ENCODE measurements at regions of chr6 and their contacts with region 1.

Region 1: DNA sequence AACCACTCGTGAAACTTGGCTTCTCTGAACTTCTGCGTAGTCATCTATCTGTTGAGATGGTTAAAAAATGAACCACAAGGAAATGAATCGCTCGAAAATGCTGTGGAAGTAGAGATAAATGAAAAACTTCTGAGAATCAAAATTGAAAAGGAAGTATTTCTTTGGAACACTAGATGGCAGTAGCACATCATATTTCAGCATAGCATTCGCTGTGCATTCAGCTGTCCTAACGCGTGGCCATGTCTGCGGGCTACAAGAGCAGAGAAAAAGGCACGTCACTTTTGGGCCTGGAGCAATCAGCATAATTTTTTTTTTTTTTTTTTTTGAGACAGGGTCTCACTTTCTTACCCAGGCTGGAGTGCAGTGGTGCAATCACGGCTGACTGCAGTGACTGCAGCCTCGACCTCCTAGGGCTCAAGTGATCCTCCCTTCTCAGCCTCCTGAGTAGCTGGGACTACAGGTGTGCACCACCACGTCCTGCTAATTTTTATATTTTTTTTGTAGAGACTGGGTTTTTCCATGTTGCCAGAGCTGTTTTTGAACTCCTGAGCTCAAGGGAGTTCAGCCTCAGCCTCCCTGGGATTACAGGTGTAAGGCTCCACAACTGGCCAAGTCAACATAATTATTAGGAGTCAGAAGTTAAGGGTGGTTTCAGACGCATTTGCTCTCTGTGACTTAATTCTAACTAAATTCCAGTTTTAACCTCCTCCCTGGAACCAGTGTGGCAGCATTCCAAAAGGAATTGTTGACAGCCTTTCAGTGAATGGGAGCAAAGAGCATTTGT is 8.8 kb upstream of the PERP start:
- DNase-seq: peak in 8 of 9 experiments; percentile 9 to 80 (median 41)
- ATAC-seq: peak; percentile 83
- H3K4me3 ChIP-seq: no peak overlapping the region
- H3K4me3 Mint-ChIP-seq: no peak overlapping the region
- H3K27ac ChIP-seq: no peak overlapping the region
- H3K27ac Mint-ChIP-seq: no peak overlapping the region
- H3K4me1 ChIP-seq: no peaks in the 10 kb centered on the region
- H3K4me1 Mint-ChIP-seq: peaks cover 4% of the 10 kb centered on the region
- H3K27me3 ChIP-seq: peaks cover 0 to 6% of the 10 kb centered on the region in 2 experiments
- H3K27me3 Mint-ChIP-seq: peaks cover 25% of the 10 kb centered on the region
- CTCF ChIP-seq: peak; percentile 90

Region 2: DNA sequence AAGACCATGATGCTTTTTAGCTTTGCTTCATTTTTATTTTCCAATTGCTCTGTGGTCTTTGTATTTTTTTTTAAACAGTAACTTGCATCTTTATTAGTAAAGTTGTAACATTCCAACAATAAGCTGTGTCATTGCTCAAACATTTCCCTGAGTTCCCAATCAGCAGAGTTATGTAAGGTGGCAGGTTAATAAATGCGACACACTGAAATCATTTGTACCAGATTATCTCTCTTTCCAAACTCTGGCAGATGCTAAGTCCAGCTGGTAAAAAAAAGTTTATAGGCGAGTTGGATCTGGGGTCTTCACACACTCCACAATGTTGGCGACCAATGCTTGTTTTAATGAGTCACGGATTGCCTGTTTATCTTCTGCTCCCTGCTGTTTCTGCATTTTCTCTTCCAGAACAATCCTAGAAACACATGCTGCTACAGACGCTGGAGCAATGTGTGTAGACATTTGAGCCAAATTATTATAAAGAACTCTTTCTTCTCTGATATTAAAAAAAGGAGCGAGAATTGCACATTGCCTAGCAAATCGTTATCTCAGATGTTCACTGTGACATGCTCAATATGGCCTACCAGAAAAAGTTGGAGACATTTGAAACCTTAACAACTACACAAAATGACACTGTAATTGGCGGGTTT is 783.3 kb before region 1 on chr6:
- CTCF ChIA-PET with region 1: no interaction called
- POLR2A ChIA-PET with region 1: no interaction called
- intact Hi-C with region 1: no loop called
- DNase-seq: no peak
- ATAC-seq: no peak
- H3K4me3 ChIP-seq: no peak overlapping the region
- H3K4me3 Mint-ChIP-seq: no peak overlapping the region
- H3K27ac ChIP-seq: no peak overlapping the region
- H3K27ac Mint-ChIP-seq: no peak overlapping the region
- H3K4me1 ChIP-seq: no peaks in the 10 kb centered on the region
- H3K4me1 Mint-ChIP-seq: no peaks in the 10 kb centered on the region
- H3K27me3 ChIP-seq: peaks cover 0 to 2% of the 10 kb centered on the region in 2 experiments
- H3K27me3 Mint-ChIP-seq: peaks cover 10% of the 10 kb centered on the region
- CTCF ChIP-seq: no peak

Region 3: GRCh38 chr6:138001750-138002349 is 114.2 kb before region 1 on chr6:
- CTCF ChIA-PET with region 1: interaction called, 31 read pairs
- POLR2A ChIA-PET with region 1: no interaction called
- intact Hi-C with region 1: no loop called
- DNase-seq: peak; percentile 39 to 75 (median 68)
- ATAC-seq: peak; percentile 54
- H3K4me3 ChIP-seq: no peak overlapping the region
- H3K4me3 Mint-ChIP-seq: no peak overlapping the region
- H3K27ac ChIP-seq: no peak overlapping the region
- H3K27ac Mint-ChIP-seq: no peak overlapping the region
- H3K4me1 ChIP-seq: no peaks in the 10 kb centered on the region
- H3K4me1 Mint-ChIP-seq: peaks cover 8% of the 10 kb centered on the region
- H3K27me3 ChIP-seq: no peaks in the 10 kb centered on the region
- H3K27me3 Mint-ChIP-seq: no peaks in the 10 kb centered on the region
- CTCF ChIP-seq: peak; percentile 88

Region 4: DNA sequence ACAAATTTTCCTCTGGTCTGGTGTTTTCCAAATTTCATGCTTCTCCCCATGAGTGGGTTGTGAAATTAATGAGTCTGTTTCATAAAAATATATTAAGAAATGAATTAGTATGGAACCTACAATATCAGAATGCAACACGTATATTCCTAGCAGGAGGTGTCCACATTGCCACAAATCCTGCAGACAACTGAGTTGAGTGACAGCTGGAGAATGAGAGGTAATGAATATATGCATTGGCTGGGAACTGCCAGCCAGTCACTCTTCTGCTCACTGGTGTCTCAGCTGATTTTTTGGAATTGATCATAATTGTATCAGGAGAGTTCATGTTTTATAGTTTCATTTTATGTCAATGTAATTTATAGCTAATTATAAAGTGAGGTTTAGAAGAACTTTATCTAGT is 39.4 kb after region 1 on chr6:
- CTCF ChIA-PET with region 1: no interaction called
- POLR2A ChIA-PET with region 1: no interaction called
- intact Hi-C with region 1: no loop called
- DNase-seq: no peak
- ATAC-seq: no peak
- H3K4me3 ChIP-seq: no peak overlapping the region
- H3K4me3 Mint-ChIP-seq: no peak overlapping the region
- H3K27ac ChIP-seq: no peak overlapping the region
- H3K27ac Mint-ChIP-seq: no peak overlapping the region
- H3K4me1 ChIP-seq: no peaks in the 10 kb centered on the region
- H3K4me1 Mint-ChIP-seq: no peaks in the 10 kb centered on the region
- H3K27me3 ChIP-seq: peaks cover 3% of the 10 kb centered on the region in 2 experiments
- H3K27me3 Mint-ChIP-seq: peaks cover 36% of the 10 kb centered on the region
- CTCF ChIP-seq: no peak

Region 5: DNA sequence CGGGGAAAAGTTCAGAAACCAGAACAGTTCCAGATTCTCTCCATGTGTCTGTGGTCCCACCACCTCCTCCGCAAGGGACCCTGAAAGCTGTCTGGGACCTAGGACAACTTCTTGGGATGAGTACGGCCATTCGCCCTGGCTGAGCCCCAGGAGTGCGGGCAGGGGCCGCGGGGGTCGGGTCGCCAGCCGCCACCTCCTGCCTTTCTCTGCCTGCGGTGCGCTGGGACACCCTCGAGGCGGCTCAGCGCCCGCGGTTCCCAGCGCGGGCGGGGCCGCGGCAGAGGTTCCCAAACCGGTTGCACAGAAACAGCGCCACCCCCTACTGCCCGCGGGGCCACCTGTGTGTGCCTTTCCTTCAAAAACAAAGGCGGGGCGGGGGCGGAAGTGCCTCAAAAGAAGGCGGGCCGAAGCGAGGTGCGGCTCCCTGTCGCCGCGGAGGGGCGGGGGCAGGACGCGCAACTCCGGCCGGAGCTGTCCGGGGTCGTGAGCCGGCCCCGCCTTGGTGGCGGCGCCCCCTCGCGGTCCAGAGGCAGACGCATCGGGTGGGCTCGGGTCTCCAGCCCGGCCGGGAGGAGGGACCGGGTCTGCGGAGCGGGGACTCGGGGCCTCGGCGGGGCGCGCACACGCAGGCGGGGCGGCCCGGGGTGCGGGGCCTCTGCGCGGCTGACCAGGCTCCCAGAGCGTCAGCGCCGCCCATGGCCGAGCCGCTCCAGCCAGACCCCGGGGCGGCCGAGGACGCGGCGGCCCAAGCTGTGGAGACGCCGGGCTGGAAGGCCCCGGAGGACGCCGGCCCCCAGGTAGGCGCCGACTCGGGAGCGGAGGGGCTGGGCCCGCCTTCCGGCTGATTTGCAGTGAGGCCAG is 288.0 kb after region 1 on chr6 and contains the start of gene HEBP2:
- CTCF ChIA-PET with region 1: interaction called, 3 read pairs
- POLR2A ChIA-PET with region 1: no interaction called
- intact Hi-C with region 1: loop called in 1 of 2 experiments (anchors 2 kb)
- DNase-seq: peak; percentile 85 to 96 (median 93)
- ATAC-seq: peak; percentile 91
- H3K4me3 ChIP-seq: peak within 1 kb of the TSS; percentile 63 to 85
- H3K4me3 Mint-ChIP-seq: peak within 1 kb of the TSS; percentile 90
- H3K27ac ChIP-seq: peak within 1 kb of the TSS; percentile 63 to 85
- H3K27ac Mint-ChIP-seq: peak within 1 kb of the TSS; percentile 97
- H3K4me1 ChIP-seq: peaks cover 15% of the 10 kb centered on the region
- H3K4me1 Mint-ChIP-seq: peaks cover 23% of the 10 kb centered on the region
- H3K27me3 ChIP-seq: no peaks in the 10 kb centered on the region
- H3K27me3 Mint-ChIP-seq: no peaks in the 10 kb centered on the region
- CTCF ChIP-seq: peak; percentile 23
- total RNA-seq, gene HEBP2: 64.6 to 69.1 TPM

Region 6: GRCh38 chr6:138428944-138429598 is 313.0 kb after region 1 on chr6:
- CTCF ChIA-PET with region 1: interaction called, 31 read pairs
- POLR2A ChIA-PET with region 1: no interaction called
- intact Hi-C with region 1: loop called (anchors 1 to 2 kb)
- DNase-seq: peak in 2 of 9 experiments; percentile 59 to 65
- ATAC-seq: peak; percentile 59
- H3K4me3 ChIP-seq: no peak overlapping the region
- H3K4me3 Mint-ChIP-seq: no peak overlapping the region
- H3K27ac ChIP-seq: no peak overlapping the region
- H3K27ac Mint-ChIP-seq: no peak overlapping the region
- H3K4me1 ChIP-seq: no peaks in the 10 kb centered on the region
- H3K4me1 Mint-ChIP-seq: peaks cover 1% of the 10 kb centered on the region
- H3K27me3 ChIP-seq: no peaks in the 10 kb centered on the region
- H3K27me3 Mint-ChIP-seq: peaks cover 9% of the 10 kb centered on the region
- CTCF ChIP-seq: peak; percentile 88

Region 7: DNA sequence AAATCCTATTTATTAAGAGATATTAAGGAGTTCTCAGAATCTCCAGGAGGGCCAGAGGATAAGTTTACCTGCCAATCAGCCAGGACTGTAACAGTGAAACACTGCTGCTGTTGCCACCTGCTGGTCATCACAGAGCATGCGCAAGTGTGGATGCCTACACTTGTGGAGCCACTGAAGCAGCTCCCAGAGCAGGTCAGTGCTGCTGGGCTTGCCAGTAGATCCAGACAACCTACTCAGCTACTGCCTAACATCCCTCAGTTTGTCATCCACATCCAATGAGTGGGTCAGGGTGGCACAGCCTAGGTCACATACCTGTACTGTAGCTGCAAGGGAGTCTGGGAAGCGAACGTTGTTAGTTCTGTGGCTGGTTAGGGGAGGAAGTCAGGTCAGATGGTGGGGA is 401.6 kb after region 1 on chr6:
- CTCF ChIA-PET with region 1: interaction called, 101 read pairs
- POLR2A ChIA-PET with region 1: no interaction called
- intact Hi-C with region 1: loop called (anchors 1 kb)
- DNase-seq: peak; percentile 10 to 74 (median 57)
- ATAC-seq: peak; percentile 74
- H3K4me3 ChIP-seq: no peak overlapping the region
- H3K4me3 Mint-ChIP-seq: no peak overlapping the region
- H3K27ac ChIP-seq: no peak overlapping the region
- H3K27ac Mint-ChIP-seq: no peak overlapping the region
- H3K4me1 ChIP-seq: no peaks in the 10 kb centered on the region
- H3K4me1 Mint-ChIP-seq: peaks cover 7% of the 10 kb centered on the region
- H3K27me3 ChIP-seq: no peaks in the 10 kb centered on the region
- H3K27me3 Mint-ChIP-seq: peaks cover 8% of the 10 kb centered on the region
- CTCF ChIP-seq: peak; percentile 84

Region 8: DNA sequence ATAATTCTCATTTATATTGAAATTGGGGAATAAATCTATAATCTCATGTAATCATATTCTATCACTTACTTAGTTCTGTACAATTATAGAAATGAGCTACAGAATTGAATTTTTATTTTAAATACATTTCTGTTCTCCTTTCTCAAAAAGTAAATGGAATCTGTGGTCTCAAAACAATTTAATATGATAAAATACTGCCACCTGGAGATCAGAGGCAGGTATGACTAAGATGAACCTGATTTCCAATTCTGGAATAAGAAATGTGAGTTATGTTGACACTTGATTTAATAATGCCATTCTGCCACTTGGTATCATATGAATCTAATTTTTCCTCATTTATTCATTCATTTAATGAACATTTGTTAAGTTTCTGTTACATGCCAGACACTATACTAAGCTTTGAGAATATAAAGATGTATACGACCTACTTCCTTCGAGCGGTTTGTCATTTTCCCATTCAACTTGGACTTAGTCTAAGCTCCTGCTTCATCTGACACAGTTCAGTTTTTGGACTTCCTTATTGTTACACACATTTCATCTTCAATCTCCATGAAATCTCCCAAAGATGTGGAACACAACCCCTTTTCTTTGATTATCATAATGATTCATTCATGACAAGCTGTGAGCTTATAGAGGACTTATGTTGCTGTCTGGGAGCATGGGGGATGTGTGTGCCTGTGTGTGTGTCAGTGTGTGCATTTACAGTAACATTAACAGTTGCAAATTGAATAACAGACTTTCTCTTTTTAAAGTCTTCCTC is 650.0 kb after region 1 on chr6:
- CTCF ChIA-PET with region 1: interaction called, 24 read pairs
- POLR2A ChIA-PET with region 1: interaction called, 3 read pairs
- intact Hi-C with region 1: loop called (anchors 1 to 5 kb)
- DNase-seq: peak in 2 of 9 experiments; percentile 34 to 52
- ATAC-seq: no peak
- H3K4me3 ChIP-seq: no peak overlapping the region
- H3K4me3 Mint-ChIP-seq: no peak overlapping the region
- H3K27ac ChIP-seq: no peak overlapping the region
- H3K27ac Mint-ChIP-seq: no peak overlapping the region
- H3K4me1 ChIP-seq: no peaks in the 10 kb centered on the region
- H3K4me1 Mint-ChIP-seq: no peaks in the 10 kb centered on the region
- H3K27me3 ChIP-seq: no peaks in the 10 kb centered on the region
- H3K27me3 Mint-ChIP-seq: no peaks in the 10 kb centered on the region
- CTCF ChIP-seq: peak; percentile 86